MCF 10A (cell line): ENCODE measurements at regions of chr3 and their contacts with region 1.

Region 1: DNA sequence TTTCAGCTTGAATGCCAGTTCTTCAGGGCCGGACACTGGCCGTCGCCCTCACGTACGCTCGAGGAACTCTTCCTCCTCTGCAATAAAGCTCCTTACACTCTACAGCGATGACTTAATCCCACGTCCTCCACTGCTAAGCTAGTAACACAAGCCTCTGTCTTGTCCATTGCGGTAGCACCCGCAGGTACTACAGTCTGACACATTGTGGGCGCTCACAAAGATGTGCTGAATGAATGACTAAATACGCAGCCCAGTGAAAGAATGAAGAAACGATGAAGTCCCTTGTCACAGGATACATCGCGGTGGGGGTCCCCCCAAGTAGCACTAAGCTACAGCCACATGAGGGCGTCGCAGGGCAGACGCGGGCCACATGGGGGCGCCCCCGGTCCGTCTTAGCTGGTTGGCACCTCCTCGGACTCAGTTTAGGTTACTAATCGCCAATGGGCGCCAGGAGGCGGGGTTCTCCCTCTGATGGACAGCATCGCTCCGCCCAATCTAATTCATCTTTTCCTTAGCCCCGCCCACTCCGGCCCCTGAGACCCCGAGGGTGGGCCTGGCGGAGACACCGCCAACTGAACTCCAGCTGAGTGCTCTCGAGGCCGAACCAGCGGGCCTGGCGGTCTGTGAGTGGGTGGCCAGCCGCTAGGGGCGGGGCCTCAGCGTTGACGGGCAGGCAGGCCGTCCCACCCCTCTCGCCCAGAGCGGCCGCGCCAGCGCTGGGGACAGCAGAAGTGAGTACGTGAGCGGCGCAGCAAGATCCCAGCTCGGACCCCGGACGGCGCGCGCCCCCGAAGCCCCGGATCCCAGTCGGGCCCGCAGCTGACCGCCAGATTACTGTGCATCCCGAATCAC is at the start of gene EPHB3:
- DNase-seq: peak; percentile 99
- H3K4me3 Mint-ChIP-seq: peak within 1 kb of the TSS; percentile 83
- H3K27ac Mint-ChIP-seq: no peak within 1 kb of the TSS
- H3K4me1 Mint-ChIP-seq: peaks cover 38% of the 10 kb centered on the region
- H3K27me3 Mint-ChIP-seq: no peaks in the 10 kb centered on the region
- CTCF ChIP-seq: peak; percentile 99
- total RNA-seq, gene EPHB3: 4.0 and 5.4 TPM in 2 replicates

Region 2: GRCh38 chr3:184652474-184652873 is 91.2 kb after region 1 on chr3:
- CTCF ChIA-PET with region 1: interaction called, 3 read pairs
- POLR2A ChIA-PET with region 1: interaction called, 19 read pairs
- intact Hi-C with region 1: no loop called
- DNase-seq: peak; percentile 92
- H3K4me3 Mint-ChIP-seq: peak overlapping the region; percentile 20
- H3K27ac Mint-ChIP-seq: peak overlapping the region; percentile 89
- H3K4me1 Mint-ChIP-seq: peaks cover 27% of the 10 kb centered on the region
- H3K27me3 Mint-ChIP-seq: no peaks in the 10 kb centered on the region
- CTCF ChIP-seq: no peak

Region 3: GRCh38 chr3:184703657-184704056 is 142.4 kb after region 1 on chr3:
- CTCF ChIA-PET with region 1: interaction called, 14 read pairs
- POLR2A ChIA-PET with region 1: interaction called, 5 read pairs
- intact Hi-C with region 1: no loop called
- DNase-seq: no peak
- H3K4me3 Mint-ChIP-seq: no peak overlapping the region
- H3K27ac Mint-ChIP-seq: no peak overlapping the region
- H3K4me1 Mint-ChIP-seq: peaks cover 5% of the 10 kb centered on the region
- H3K27me3 Mint-ChIP-seq: no peaks in the 10 kb centered on the region
- CTCF ChIP-seq: no peak

Region 4: GRCh38 chr3:184727357-184728009 is 166.2 kb after region 1 on chr3:
- CTCF ChIA-PET with region 1: interaction called, 3 read pairs
- POLR2A ChIA-PET with region 1: interaction called, 20 read pairs
- intact Hi-C with region 1: loop called (anchors 1 kb)
- DNase-seq: peak; percentile 90
- H3K4me3 Mint-ChIP-seq: no peak overlapping the region
- H3K27ac Mint-ChIP-seq: no peak overlapping the region
- H3K4me1 Mint-ChIP-seq: peaks cover 6% of the 10 kb centered on the region
- H3K27me3 Mint-ChIP-seq: no peaks in the 10 kb centered on the region
- CTCF ChIP-seq: peak; percentile 50

Region 5: DNA sequence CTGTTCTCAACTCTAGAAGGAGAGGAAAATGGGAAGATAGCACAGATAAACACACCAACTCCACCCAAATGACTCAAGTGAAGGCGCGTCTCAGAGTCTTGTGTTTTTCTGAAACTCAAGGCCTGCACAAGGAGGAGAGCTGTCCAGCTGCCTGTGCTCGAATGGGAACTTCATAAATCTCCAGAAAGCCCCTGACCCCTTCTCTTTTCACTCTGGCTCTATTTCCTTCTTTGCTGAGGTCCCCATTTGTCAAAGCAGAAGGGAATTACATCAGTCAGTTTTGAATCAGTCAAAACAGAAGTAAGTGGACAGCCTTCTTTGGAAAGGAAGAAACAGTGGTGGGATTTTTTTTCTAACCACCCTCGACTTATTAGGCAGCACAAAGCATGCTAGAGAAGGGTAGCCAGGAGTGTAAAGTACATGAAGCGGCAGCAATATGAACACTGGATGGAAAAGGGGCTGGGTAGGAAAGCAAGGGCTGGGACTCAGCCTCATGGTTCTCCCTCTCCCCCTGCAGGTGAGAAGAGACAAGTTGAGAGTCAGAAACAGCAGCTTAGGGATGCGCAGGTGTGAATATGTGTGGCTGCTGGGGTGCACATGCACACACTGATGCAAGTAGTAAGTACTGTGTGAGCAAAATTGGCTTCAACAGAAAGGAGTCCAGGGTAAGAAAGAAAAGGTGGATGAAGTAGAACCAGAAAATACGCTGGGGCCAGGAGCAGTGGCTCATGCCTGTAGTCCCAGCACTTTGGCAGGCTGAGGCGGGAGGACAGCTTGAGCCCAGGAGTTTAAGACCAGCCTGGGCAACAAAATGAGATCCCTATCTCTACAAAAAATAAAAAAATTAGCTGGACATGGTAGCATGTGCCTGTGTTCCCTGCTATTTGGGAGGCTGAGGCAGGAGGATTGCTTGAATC is 187.2 kb after region 1 on chr3:
- CTCF ChIA-PET with region 1: interaction called, 13 read pairs
- POLR2A ChIA-PET with region 1: interaction called, 68 read pairs
- intact Hi-C with region 1: loop called (anchors 1 kb)
- DNase-seq: peak; percentile 73
- H3K4me3 Mint-ChIP-seq: no peak overlapping the region
- H3K27ac Mint-ChIP-seq: no peak overlapping the region
- H3K4me1 Mint-ChIP-seq: peaks cover 18% of the 10 kb centered on the region
- H3K27me3 Mint-ChIP-seq: no peaks in the 10 kb centered on the region
- CTCF ChIP-seq: peak; percentile 60

Region 6: GRCh38 chr3:184765730-184766074 is 204.4 kb after region 1 on chr3:
- CTCF ChIA-PET with region 1: interaction called, 38 read pairs
- POLR2A ChIA-PET with region 1: interaction called, 85 read pairs
- intact Hi-C with region 1: no loop called
- DNase-seq: peak; percentile 84
- H3K4me3 Mint-ChIP-seq: peak overlapping the region; percentile 59
- H3K27ac Mint-ChIP-seq: peak overlapping the region; percentile 89
- H3K4me1 Mint-ChIP-seq: peaks cover 31% of the 10 kb centered on the region
- H3K27me3 Mint-ChIP-seq: no peaks in the 10 kb centered on the region
- CTCF ChIP-seq: no peak

Region 7: GRCh38 chr3:184808021-184808420 is 246.7 kb after region 1 on chr3:
- CTCF ChIA-PET with region 1: interaction called, 8 read pairs
- POLR2A ChIA-PET with region 1: interaction called, 4 read pairs
- intact Hi-C with region 1: loop called (anchors 1 kb)
- DNase-seq: no peak
- H3K4me3 Mint-ChIP-seq: no peak overlapping the region
- H3K27ac Mint-ChIP-seq: no peak overlapping the region
- H3K4me1 Mint-ChIP-seq: peaks cover 11% of the 10 kb centered on the region
- H3K27me3 Mint-ChIP-seq: no peaks in the 10 kb centered on the region
- CTCF ChIP-seq: peak; percentile 35